ENCODE measurements at regions of chr1 and their contacts with region 1.

Region 1: GRCh38 chr1:161966067-161966466 is 57.6 kb downstream of the OLFML2B start:
- DNase-seq: no peak
- H3K4me3 ChIP-seq: no peak overlapping the region
- H3K27ac ChIP-seq: no peak overlapping the region
- H3K4me1 ChIP-seq: peaks cover 12% of the 10 kb centered on the region
- H3K27me3 ChIP-seq: no peaks in the 10 kb centered on the region
- CTCF ChIP-seq: no peak

Region 2: DNA sequence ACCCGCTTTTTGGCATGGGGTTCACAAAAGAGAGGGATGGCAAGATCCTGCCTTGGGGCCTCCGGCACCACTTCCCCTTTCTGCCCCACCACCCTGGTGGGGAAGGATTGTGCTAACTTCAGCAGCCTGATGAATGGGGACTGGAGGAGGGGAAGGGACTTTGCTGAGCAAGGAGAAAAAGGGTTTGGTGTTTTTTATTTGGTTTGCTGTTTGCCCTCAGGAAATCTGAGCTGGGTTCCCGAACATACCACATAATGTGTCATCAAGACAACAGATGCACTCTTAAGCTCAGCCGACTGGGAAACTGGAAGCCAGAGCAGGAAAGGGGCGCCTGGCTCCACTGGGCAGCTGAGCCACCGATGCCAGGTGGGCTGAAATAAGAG is 37.8 kb after region 1 on chr1:
- CTCF ChIA-PET with region 1: no interaction called
- dilution Hi-C with region 1: no loop called
- in situ Hi-C with region 1: no loop called
- intact Hi-C with region 1: loop called (anchors 5 kb)
- DNase-seq: peak; percentile 81
- H3K4me3 ChIP-seq: no peak overlapping the region
- H3K27ac ChIP-seq: no peak overlapping the region
- H3K4me1 ChIP-seq: peaks cover 13% of the 10 kb centered on the region
- H3K27me3 ChIP-seq: peaks cover 21% of the 10 kb centered on the region
- CTCF ChIP-seq: no peak

Region 3: DNA sequence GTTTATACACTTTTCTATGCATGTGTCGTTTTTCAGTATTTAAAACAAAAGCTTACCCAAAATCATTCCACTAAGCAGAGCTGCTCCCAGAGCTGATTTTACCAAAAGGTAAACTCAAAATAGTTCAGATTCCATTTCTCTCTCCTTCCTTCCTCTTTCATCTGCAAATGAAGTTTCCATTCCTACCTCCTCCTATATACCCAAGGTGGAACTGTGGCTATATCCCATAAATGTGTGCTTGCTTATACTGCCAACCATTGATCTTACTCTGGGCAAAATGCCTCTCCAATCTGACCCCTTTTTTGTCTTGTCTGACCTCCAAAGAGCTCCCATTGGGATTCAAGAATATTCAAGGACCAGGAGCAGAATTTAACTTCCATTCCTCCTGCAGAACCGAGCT is 48.1 kb after region 1 on chr1:
- CTCF ChIA-PET with region 1: no interaction called
- dilution Hi-C with region 1: no loop called
- in situ Hi-C with region 1: no loop called
- intact Hi-C with region 1: no loop called
- DNase-seq: no peak
- H3K4me3 ChIP-seq: no peak overlapping the region
- H3K27ac ChIP-seq: no peak overlapping the region
- H3K4me1 ChIP-seq: no peaks in the 10 kb centered on the region
- H3K27me3 ChIP-seq: peaks cover 3% of the 10 kb centered on the region
- CTCF ChIP-seq: no peak

Region 4: GRCh38 chr1:162248854-162249535 is 282.9 kb after region 1 on chr1:
- CTCF ChIA-PET with region 1: no interaction called
- dilution Hi-C with region 1: no loop called
- in situ Hi-C with region 1: no loop called
- intact Hi-C with region 1: no loop called
- DNase-seq: peak; percentile 16
- H3K4me3 ChIP-seq: no peak overlapping the region
- H3K27ac ChIP-seq: no peak overlapping the region
- H3K4me1 ChIP-seq: peaks cover 8% of the 10 kb centered on the region
- H3K27me3 ChIP-seq: no peaks in the 10 kb centered on the region
- CTCF ChIP-seq: no peak

Measured in mammary epithelial cell (primary cell).